ENCODE measurements at regions of chr1 and their contacts with region 1.

Region 1: GRCh38 chr1:183942933-183943693 is 94.4 kb downstream of the COLGALT2 start:
- H3K4me3 ChIP-seq: no peak overlapping the region
- H3K27ac ChIP-seq: 0 out of 2 replicates have a peak overlapping the region, but pooled peaks have one; percentile 6
- H3K4me1 ChIP-seq: peaks cover 8% of the 10 kb centered on the region; the same call in 1 of the 2 replicates
- CTCF ChIP-seq: peak; percentile 25; the same call in 1 of the 2 replicates

Region 2: GRCh38 chr1:184051485-184052193 is 108.5 kb after region 1 on chr1 and contains the start of gene TSEN15:
- CTCF ChIA-PET with region 1: interaction called, 9 read pairs
- POLR2A ChIA-PET with region 1: interaction called, 11 read pairs
- H3K4me3 ChIP-seq: peak within 1 kb of the TSS; percentile 96
- H3K27ac ChIP-seq: peak within 1 kb of the TSS; percentile 97
- H3K4me1 ChIP-seq: no peaks in the 10 kb centered on the region
- CTCF ChIP-seq: peak; percentile 54; the same call in 1 of the 2 replicates

Measured in HEK293 (cell line).